MCF 10A (cell line): ENCODE measurements at regions of chr7 and their contacts with region 1.

Region 1: GRCh38 chr7:992709-993607 is 10.0 kb downstream of the CYP2W1 start:
- DNase-seq: peak; percentile 93
- H3K4me3 Mint-ChIP-seq: no peak overlapping the region
- H3K27ac Mint-ChIP-seq: no peak overlapping the region
- H3K4me1 Mint-ChIP-seq: peaks cover 6% of the 10 kb centered on the region
- H3K27me3 Mint-ChIP-seq: no peaks in the 10 kb centered on the region
- CTCF ChIP-seq: peak; percentile 99

Region 2: DNA sequence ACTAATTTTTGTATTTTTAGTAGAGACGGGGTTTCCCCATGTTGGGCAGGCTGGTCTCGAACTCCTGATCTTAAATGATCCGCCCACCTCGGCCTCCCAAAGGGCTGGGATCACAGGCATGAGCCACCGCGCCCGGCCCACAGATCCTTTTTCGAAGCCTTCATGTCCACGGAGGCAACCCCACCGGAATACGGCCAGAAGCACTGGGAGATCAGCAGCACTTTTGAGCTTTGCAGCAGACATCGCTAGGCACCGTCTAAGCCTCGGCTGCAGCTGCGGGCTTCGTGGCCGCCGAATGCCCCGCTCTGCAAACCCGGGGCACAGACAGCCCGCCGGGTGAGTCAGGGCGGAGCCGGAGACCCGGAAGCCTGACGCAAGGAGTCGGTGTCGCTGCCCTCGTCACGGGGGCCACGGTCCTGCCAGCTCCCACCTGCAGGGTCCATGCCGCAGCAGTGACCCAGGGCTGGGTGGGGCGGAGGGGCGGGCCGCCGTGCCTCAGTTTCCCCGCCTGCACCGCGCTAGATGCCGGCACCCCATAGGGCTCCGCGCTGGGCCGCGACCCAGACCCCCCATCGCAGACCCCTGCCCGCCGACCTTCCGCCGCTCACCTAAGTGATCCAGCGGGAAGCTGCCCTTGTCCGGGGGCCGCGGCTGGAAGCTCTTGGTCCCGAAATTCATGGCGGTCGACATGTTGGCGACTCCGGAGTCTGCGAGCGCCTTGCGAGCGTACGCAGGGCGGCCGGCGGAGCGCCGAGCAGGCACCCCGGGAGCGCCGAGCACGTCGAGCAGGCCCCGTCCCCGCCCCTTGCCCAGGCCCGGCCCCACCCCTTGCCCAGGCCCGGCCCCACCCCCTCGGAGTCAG is 17.9 kb before region 1 on chr7 and contains the start of gene COX19:
- CTCF ChIA-PET with region 1: interaction called, 27 read pairs
- POLR2A ChIA-PET with region 1: interaction called, 5 read pairs
- intact Hi-C with region 1: no loop called
- DNase-seq: peak; percentile 78
- H3K4me3 Mint-ChIP-seq: peak within 1 kb of the TSS; percentile 87
- H3K27ac Mint-ChIP-seq: peak within 1 kb of the TSS; percentile 79
- H3K4me1 Mint-ChIP-seq: no peaks in the 10 kb centered on the region
- H3K27me3 Mint-ChIP-seq: no peaks in the 10 kb centered on the region
- CTCF ChIP-seq: no peak
- total RNA-seq, gene COX19: 14.7 and 16.5 TPM in 2 replicates

Region 3: DNA sequence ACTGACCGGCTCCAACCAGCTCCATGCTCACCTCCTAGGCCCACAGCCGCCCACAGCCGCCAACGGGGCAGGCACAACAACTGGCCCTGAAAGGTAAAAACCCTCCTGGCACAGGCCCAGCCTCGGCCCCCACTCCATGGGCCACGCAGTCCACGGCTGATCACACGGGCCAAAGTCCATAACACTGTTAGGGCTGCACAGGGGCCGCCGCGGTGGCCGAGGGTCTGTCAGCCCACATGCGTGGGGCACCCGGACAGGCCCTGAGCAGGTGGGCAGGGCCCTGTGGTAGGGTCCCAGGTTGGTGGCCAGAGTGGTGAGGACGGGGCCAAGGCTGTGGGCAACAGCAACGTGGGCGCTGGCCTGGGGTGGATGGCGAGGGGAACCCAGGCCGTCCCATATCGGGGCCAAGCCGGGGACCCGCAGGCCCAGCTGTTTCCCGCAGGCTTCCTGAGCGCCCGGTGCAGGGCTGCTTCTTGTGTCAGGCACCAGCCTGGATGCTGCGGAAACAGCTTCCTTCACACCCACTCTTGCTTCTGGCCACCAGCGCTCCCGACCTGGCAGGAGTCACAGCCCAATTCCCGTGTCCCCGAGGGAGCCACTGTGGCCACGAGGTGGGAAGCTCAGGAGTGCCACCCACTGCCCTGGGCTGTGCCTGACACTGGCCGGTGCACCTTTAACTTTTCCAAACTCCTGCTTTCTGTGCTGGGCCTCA is 19.2 kb after region 1 on chr7:
- CTCF ChIA-PET with region 1: interaction called, 17 read pairs
- POLR2A ChIA-PET with region 1: no interaction called
- intact Hi-C with region 1: no loop called
- DNase-seq: no peak
- H3K4me3 Mint-ChIP-seq: no peak overlapping the region
- H3K27ac Mint-ChIP-seq: no peak overlapping the region
- H3K4me1 Mint-ChIP-seq: peaks cover 8% of the 10 kb centered on the region
- H3K27me3 Mint-ChIP-seq: no peaks in the 10 kb centered on the region
- CTCF ChIP-seq: no peak

Region 4: DNA sequence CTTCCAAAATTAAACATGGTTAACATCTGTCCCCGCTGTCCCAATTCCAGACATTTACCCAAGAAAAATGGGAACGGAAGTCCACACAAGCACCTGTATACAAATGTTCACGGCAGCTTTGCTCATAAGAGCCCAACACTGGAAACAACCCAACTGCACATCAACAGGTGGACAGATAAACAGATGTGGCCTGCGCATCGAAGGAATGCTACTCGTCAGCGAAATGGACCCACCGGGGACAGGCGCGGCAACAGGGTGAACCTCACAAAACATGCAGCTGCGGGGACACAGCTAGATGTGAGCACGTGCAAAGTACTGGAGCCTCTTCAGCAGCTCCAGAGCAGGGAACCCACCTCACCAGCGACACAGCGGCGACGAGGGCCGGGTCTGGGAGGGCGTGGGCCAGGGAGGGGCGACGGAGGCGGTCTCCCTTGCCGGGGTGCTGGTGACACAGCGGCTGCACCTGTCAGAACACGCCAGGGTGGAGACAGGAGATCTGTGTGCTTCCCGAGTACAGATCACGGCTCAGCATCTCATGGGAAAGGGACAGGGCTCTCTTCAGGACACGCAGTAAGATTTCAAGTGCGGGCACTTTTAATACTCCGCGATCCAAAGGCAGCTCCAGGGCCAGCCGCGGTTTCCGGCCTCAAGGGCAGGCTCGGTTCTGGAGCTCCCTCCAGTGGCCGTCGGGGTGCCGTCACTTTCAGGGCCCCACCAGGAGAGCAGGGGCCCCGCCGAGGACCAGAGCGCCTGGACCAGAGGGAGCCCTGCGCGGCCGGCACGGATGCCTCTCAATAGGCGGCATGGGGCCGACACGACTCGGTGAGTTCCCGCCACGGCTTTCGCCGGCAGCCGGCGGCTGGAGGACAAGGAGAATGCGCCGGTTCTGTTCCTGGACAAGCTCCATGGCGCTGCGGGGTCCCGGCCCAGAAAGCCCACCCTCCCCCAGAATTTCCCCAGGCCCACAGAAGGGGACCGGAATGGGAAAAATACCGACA is 72.6 kb after region 1 on chr7:
- CTCF ChIA-PET with region 1: interaction called, 98 read pairs
- POLR2A ChIA-PET with region 1: interaction called, 14 read pairs
- intact Hi-C with region 1: no loop called
- DNase-seq: peak; percentile 72
- H3K4me3 Mint-ChIP-seq: no peak overlapping the region
- H3K27ac Mint-ChIP-seq: no peak overlapping the region
- H3K4me1 Mint-ChIP-seq: no peaks in the 10 kb centered on the region
- H3K27me3 Mint-ChIP-seq: no peaks in the 10 kb centered on the region
- CTCF ChIP-seq: peak; percentile 82

Region 5: DNA sequence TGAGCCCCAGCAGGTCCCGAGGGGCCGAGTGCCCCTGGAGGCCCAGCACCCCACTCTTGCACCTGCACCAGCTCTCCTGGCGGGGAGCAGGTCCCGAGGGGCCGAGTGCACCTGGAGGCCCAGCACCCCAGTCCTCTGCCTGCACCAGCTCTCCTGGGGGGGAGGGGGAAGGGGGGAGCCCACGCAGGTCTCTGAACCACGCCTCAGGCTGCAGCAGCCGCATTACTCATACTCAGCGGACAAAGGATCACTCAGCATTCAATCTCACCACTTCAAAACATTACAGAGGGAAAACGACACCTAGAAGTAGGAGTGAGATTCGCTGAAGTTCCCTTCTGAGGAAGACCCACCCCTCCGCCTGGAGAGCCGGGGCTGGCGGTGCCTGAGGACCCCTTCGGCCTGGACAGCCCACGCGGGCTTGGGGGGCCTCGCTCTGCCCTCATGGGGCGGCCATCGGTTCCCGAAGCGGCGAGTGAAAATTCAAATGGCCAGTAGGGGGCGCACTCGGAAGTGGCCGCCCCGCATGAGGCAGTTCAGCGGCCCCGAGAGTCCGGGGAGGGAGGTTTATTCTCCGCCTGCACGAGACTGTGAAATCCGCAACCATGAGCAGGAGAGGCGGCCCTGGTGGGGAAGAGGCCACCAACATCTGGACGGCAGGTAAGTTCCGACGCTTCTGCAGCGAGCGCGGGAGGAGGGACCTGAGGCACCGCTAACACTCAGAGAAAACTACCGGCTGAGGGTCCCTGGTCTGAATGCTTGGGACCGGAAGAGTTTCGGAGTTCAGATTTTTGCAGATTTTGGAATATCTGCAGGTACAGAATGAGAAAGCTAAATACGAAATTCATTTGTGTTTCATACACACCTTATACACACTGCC is 93.9 kb after region 1 on chr7:
- CTCF ChIA-PET with region 1: interaction called, 26 read pairs
- POLR2A ChIA-PET with region 1: interaction called, 3 read pairs
- intact Hi-C with region 1: no loop called
- DNase-seq: peak; percentile 73
- H3K4me3 Mint-ChIP-seq: peak overlapping the region; percentile 81
- H3K27ac Mint-ChIP-seq: no peak overlapping the region
- H3K4me1 Mint-ChIP-seq: peaks cover 22% of the 10 kb centered on the region
- H3K27me3 Mint-ChIP-seq: no peaks in the 10 kb centered on the region
- CTCF ChIP-seq: peak; percentile 83

Region 6: GRCh38 chr7:1144269-1144771 is 151.4 kb after region 1 on chr7:
- CTCF ChIA-PET with region 1: interaction called, 10 read pairs
- POLR2A ChIA-PET with region 1: no interaction called
- intact Hi-C with region 1: no loop called
- DNase-seq: peak; percentile 14
- H3K4me3 Mint-ChIP-seq: no peak overlapping the region
- H3K27ac Mint-ChIP-seq: no peak overlapping the region
- H3K4me1 Mint-ChIP-seq: no peaks in the 10 kb centered on the region
- H3K27me3 Mint-ChIP-seq: no peaks in the 10 kb centered on the region
- CTCF ChIP-seq: no peak

Region 7: DNA sequence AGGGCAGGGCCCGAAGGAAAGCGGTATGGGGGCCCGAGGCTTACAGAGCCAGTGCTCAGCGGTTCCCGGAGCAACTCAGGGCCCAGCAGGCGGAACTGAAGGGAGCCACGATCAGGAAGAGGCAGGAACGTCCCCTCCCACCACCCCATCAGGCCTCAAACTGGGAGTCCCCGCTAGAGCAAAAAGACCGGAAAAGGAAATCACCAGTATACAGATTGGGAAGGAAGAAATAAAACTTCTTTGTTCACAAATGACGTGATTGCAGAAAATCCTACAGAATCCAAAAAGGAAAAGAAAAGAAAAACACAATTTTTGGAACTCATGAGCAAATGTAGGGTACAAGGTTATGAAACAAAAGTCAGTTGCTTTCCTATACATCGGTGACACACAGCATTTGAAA is 188.7 kb after region 1 on chr7:
- CTCF ChIA-PET with region 1: interaction called, 69 read pairs
- POLR2A ChIA-PET with region 1: no interaction called
- intact Hi-C with region 1: loop called (anchors 1 kb)
- DNase-seq: no peak
- H3K4me3 Mint-ChIP-seq: no peak overlapping the region
- H3K27ac Mint-ChIP-seq: no peak overlapping the region
- H3K4me1 Mint-ChIP-seq: peaks cover 1% of the 10 kb centered on the region
- H3K27me3 Mint-ChIP-seq: peaks cover 17% of the 10 kb centered on the region
- CTCF ChIP-seq: no peak